PC-9 (cell line): ENCODE measurements at regions of chr17 and their contacts with region 1.

Region 1: DNA sequence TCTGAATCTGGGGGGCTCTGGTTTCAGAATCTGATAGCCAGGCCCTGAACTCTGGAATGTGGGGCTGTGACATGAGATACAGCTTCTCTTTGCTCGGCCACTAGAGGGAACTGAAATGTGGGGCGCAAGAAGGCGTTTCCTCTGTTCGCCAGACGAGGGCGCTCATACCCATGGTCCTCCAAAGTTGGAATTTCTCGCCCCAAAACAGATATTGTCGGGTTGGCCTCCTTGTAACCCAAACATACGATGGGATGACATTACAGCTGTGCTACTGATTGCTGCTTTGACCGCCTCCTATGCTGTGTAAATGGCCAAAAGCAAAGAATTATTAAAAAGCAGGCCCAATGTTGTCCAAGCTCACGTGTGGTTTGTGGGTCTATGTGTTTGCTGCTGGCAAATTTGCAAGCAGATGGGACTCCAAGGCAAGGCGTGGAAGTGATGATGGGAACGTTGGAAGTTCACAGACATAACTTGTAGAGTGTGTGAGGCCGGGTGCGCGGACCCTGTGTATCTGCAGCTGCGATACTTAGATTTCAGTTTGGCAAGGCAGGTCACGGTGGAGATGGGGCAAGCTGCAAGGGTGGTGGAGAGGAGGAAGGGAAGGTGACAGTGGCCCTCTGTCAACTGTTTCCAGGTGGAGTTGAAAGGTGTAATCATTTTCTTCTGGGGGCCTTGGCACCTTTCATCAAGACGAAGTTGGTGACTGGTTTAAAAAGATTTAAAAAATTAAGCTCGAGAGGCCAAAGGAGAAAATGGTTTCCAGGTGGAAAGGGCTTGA is 13.0 kb upstream of the MSI2 start:
- DNase-seq: peak; percentile 49 to 52
- H3K4me3 ChIP-seq: no peak overlapping the region
- H3K27ac ChIP-seq: no peak overlapping the region
- H3K4me1 ChIP-seq: no peaks in the 10 kb centered on the region
- H3K27me3 ChIP-seq: peaks cover 19% of the 10 kb centered on the region
- CTCF ChIP-seq: peak; percentile 99

Region 2: DNA sequence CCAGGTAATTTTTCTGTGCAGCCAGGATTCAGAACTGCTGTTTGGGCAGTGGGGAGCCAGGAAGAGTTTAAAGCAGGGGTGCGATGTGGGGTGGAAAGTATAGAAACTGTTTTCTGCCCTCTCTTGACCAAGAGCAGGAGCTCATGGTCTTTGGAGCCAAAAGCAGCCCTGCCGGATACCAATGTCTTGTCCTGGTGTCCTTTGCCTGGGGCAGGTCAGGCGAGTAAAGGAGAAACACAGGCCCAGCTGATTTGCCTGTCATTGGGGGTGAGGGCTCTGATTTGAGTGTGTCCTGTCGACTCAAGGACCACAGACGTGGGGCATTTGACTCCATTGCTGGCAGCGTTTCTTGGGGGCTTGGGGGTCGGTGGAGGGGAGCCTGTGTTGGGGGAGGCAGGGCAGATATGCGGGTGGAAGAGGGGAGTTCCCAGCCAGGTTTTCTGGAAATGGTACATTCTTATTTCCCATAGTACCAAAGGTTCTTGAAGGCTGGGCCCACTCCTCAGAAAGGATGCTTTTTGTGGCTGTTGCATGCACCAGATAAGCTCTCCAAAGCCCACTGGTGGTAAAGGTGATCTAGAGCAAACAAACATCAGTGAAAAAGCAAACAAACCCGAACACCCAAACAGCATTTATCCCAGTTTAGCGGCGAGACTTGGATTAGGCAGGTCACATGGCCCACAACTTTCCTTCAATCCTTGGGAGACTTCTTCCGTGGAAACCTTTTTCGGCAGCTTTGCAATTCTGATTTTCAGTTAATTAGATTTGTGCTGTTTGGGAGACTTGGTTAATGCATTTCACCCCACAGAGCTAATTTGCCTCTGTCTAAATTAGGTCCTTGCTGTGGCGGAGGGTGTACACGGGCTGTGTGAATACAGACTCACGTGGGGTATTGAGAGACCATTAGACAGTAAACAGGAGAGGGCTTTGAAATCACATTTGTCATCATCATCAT is 72.0 kb after region 1 on chr17:
- CTCF ChIA-PET with region 1: no interaction called
- POLR2A ChIA-PET with region 1: no interaction called
- intact Hi-C with region 1: no loop called
- DNase-seq: no peak
- H3K4me3 ChIP-seq: no peak overlapping the region
- H3K27ac ChIP-seq: no peak overlapping the region
- H3K4me1 ChIP-seq: no peaks in the 10 kb centered on the region
- H3K27me3 ChIP-seq: peaks cover 43% of the 10 kb centered on the region
- CTCF ChIP-seq: no peak

Region 3: GRCh38 chr17:57671667-57672632 is 428.6 kb after region 1 on chr17:
- CTCF ChIA-PET with region 1: interaction called, 5 read pairs
- POLR2A ChIA-PET with region 1: no interaction called
- intact Hi-C with region 1: loop called (anchors 1 kb)
- DNase-seq: peak in 1 of 2 experiments; percentile 44
- H3K4me3 ChIP-seq: no peak overlapping the region
- H3K27ac ChIP-seq: no peak overlapping the region
- H3K4me1 ChIP-seq: no peaks in the 10 kb centered on the region
- H3K27me3 ChIP-seq: peaks cover 3% of the 10 kb centered on the region; the same call in 1 of the 2 replicates
- CTCF ChIP-seq: peak; percentile 91

Region 4: DNA sequence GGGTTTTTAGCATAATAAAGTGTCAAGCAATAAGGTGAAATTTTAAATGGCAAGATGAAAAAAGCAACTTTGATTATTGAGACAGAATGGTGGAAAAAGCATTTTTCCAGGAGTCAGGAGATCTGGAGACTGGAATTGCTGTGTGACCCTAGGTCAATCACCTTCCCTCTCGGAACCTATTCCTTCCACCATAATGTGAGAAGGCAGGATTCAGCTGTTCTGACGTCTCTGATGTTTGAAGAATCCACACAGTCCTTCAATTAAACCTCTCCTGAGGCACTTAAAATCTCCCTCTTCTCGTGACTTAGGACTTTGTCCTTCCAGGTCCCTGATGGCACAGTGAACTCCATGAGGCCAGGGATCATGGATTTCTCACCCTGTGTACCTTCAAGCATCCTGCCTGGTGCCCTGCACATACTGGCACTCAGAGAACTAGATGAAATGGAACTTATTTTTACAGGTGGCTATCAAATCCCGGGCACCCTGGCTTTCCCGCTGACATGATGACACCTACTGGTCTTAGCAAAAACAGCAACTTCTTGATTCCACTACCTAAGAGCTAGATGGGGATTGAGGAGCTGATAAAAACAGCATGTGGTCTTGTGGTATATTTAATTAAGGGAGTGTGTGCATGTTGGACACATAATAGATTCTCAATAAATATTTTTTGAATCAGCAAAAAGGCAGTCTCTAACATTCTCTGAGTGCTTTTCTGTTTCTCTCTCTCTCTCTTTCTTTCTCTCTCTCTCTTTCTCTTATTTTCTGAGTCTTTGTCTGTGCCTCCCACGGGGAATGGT is 504.1 kb after region 1 on chr17:
- CTCF ChIA-PET with region 1: interaction called, 7 read pairs
- POLR2A ChIA-PET with region 1: no interaction called
- intact Hi-C with region 1: loop called (anchors 5 kb)
- DNase-seq: peak; percentile 15 to 54
- H3K4me3 ChIP-seq: no peak overlapping the region
- H3K27ac ChIP-seq: no peak overlapping the region
- H3K4me1 ChIP-seq: no peaks in the 10 kb centered on the region
- H3K27me3 ChIP-seq: peaks cover 82% of the 10 kb centered on the region
- CTCF ChIP-seq: peak; percentile 88

Region 5: GRCh38 chr17:57833179-57833939 is 590.0 kb after region 1 on chr17:
- CTCF ChIA-PET with region 1: no interaction called
- POLR2A ChIA-PET with region 1: no interaction called
- intact Hi-C with region 1: loop called (anchors 5 kb)
- DNase-seq: peak; percentile 37 to 53
- H3K4me3 ChIP-seq: no peak overlapping the region
- H3K27ac ChIP-seq: no peak overlapping the region
- H3K4me1 ChIP-seq: no peaks in the 10 kb centered on the region
- H3K27me3 ChIP-seq: no peaks in the 10 kb centered on the region
- CTCF ChIP-seq: peak; percentile 97

Region 6: GRCh38 chr17:58006924-58007780 is 763.8 kb after region 1 on chr17 and contains the start of gene SRSF1:
- CTCF ChIA-PET with region 1: no interaction called
- POLR2A ChIA-PET with region 1: no interaction called
- intact Hi-C with region 1: loop called (anchors 10 kb)
- DNase-seq: peak; percentile 95 to 96
- H3K4me3 ChIP-seq: peak within 1 kb of the TSS; percentile 95
- H3K27ac ChIP-seq: peak within 1 kb of the TSS; percentile 95
- H3K4me1 ChIP-seq: peaks cover 38% of the 10 kb centered on the region
- H3K27me3 ChIP-seq: no peaks in the 10 kb centered on the region
- CTCF ChIP-seq: 0 out of 2 replicates have a peak, but pooled peaks have one; percentile 8
- total RNA-seq, gene SRSF1: 210 and 278 TPM in 2 replicates

Region 7: GRCh38 chr17:58107283-58107682 is 863.9 kb after region 1 on chr17:
- CTCF ChIA-PET with region 1: no interaction called
- POLR2A ChIA-PET with region 1: no interaction called
- intact Hi-C with region 1: loop called (anchors 1 kb)
- DNase-seq: no peak
- H3K4me3 ChIP-seq: no peak overlapping the region
- H3K27ac ChIP-seq: no peak overlapping the region
- H3K4me1 ChIP-seq: no peaks in the 10 kb centered on the region
- H3K27me3 ChIP-seq: no peaks in the 10 kb centered on the region
- CTCF ChIP-seq: no peak